K562 (cell line): ENCODE measurements at regions of chr11 and their contacts with region 1.

Region 1: GRCh38 chr11:14358729-14359439 is at the start of gene RRAS2:
- DNase-seq: peak; percentile 84 to 88 (median 85)
- ATAC-seq: peak; percentile 93
- H3K4me3 ChIP-seq: peak within 1 kb of the TSS; percentile 94
- H3K27ac ChIP-seq: peak within 1 kb of the TSS; percentile 80
- H3K4me1 ChIP-seq: peaks cover 6 to 12% of the 10 kb centered on the region in 2 experiments; a peak in 3 of 5 replicates
- H3K27me3 ChIP-seq: peaks cover 0 to 7% of the 10 kb centered on the region in 2 experiments; a peak in 1 of 5 replicates
- CTCF ChIP-seq: peak in 1 of 3 experiments; percentile 7; a peak in 1 of 6 replicates
- EP300 ChIP-seq: no peak
- POLR2A ChIP-seq: peak; percentile 74
- RAD21 ChIP-seq: no peak
- polyA plus RNA-seq, gene RRAS2: 9.4 to 10.3 TPM

Region 2: GRCh38 chr11:14413307-14414069 is 54.6 kb after region 1 on chr11:
- CTCF ChIA-PET with region 1: no interaction called
- POLR2A ChIA-PET with region 1: no interaction called
- in situ Hi-C with region 1: no loop called
- intact Hi-C with region 1: loop called (anchors 5 kb)
- DNase-seq: peak; percentile 45 to 64 (median 55)
- ATAC-seq: peak; percentile 59
- H3K4me3 ChIP-seq: no peak overlapping the region
- H3K27ac ChIP-seq: no peak overlapping the region
- H3K4me1 ChIP-seq: peaks cover 10 to 22% of the 10 kb centered on the region in 2 experiments; a peak in 4 of 5 replicates
- H3K27me3 ChIP-seq: no peaks in the 10 kb centered on the region
- CTCF ChIP-seq: peak; percentile 30 to 55 (median 47); a peak in 5 of 6 replicates
- EP300 ChIP-seq: no peak
- POLR2A ChIP-seq: no peak
- RAD21 ChIP-seq: peak in 1 of 2 experiments; percentile 38; a peak in 1 of 4 replicates